Psoas muscle (tissue), 8 donors: ENCODE measurements at regions of chr17 and their contacts with region 1.

Region 1: DNA sequence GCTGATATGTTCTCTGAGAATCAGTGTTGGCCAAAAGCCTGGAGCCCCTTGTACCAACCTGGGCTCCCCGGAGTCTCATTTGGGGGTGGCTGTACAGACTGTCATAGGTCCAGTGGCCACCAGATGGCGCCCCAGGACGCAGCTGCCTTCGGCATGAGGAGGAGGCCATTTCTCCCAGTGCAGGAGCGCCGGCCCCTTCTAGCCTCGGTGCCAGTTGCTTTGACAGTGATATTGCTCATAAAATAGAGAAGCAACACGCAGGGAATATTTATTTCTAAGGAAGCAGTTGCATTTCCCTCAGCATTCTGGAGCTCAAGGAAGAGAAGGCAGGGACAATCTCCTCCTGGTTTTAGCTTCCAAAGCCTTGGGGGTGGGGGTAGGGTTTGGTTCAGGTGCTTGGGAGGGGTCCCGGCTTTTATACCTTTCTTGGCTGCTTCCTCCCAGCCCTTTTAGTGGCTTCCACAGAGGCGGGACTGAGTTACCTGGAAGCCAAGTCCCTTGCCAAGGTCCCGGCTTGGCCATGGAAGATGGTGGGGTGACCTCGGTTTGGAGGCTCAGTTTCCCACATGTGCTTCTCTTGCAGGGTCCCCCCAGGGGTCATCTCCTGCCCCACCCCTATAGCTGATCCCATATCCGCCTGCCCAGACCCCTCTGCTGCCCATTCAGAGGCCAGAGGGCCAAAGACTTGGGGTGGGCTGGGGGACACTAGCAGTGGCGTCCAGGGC is 117.8 kb upstream of the CDC42EP4 start:
- DNase-seq: peak; percentile 86 to 92
- ATAC-seq: peak; percentile 80 to 95 (median 92)
- H3K4me3 ChIP-seq: no peak overlapping the region
- H3K27ac ChIP-seq: no peak overlapping the region
- H3K4me1 ChIP-seq: no peaks in the 10 kb centered on the region
- H3K27me3 ChIP-seq: peaks cover 0 to 2% (median 0%) of the 10 kb centered on the region in 3 donors
- CTCF ChIP-seq: peak; percentile 93

Region 2: GRCh38 chr17:73387746-73388577 is 41.6 kb before region 1 on chr17:
- intact Hi-C with region 1: no loop called
- DNase-seq: peak in 1 of 2 donors; percentile 40
- ATAC-seq: no peak
- H3K4me3 ChIP-seq: no peak overlapping the region
- H3K27ac ChIP-seq: no peak overlapping the region
- H3K4me1 ChIP-seq: no peaks in the 10 kb centered on the region
- H3K27me3 ChIP-seq: no peaks in the 10 kb centered on the region
- CTCF ChIP-seq: no peak

Region 3: DNA sequence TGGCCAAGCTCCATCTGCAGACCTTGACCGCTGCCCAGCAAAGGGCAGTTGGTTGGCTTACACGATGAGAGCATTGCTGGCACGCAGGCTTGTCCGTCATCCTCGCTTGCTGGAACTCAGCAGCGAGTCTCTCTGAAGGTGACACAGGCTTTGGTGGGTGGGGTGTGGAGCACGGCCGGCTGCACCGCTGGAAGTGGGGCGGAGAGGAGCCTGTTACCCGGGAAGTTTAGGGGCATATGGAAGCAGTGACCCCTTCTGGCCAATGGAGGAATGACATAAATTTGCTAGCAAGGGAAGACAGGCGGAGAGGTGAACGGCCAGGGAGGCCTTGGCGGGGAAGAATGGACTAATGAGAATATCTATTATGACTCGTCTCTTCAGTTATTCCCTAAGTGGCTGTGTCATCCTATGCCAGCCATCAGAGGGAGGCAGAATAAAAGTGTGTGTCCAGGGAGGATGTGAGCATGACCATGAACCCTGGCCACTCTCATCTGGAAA is 280.5 kb after region 1 on chr17:
- intact Hi-C with region 1: loop called (anchors 2 to 5 kb)
- DNase-seq: peak in 1 of 2 donors; percentile 29
- ATAC-seq: peak; percentile 62 to 73 (median 68)
- H3K4me3 ChIP-seq: no peak overlapping the region
- H3K27ac ChIP-seq: no peak overlapping the region
- H3K4me1 ChIP-seq: no peaks in the 10 kb centered on the region
- H3K27me3 ChIP-seq: peaks cover 0 to 6% (median 0%) of the 10 kb centered on the region in 3 donors
- CTCF ChIP-seq: peak; percentile 68

Region 4: DNA sequence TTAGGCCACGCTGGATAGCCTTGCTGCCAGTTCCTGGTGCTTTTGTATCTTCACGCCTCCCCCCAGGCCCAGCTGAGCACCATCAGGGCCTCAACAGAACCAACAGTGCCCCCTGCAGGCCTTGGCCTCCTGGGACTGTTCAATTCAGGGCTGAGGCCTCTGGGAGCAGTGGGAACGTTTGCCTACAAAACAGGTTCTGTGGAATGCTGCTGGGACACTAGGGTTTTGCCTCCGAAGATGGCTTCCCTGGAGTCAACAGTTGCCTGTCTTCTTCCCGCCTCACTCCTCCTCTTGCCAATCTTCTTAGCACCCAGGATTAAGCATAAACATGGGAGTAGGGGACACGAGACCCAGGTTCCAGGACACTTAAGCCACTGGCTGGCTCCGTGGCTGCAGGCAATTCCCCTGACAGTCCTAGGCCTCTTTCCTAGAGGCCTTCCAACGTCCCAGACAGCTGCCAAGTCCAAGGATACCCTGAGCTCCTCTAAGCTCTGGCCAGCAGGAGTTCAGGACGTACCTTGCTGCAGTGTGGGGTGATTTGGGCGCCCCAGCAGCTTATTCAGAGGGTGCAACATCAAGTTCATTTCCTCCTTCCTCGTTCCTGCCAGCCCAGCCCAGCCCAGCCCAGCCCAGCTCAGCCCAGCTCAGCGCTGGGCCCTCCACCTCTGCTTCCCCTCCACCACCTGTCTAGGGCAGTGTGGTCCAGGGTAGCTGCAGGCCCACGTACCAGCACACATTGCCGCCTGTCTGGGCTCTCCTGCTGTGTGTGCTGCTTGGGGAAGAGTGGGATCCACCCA is 527.3 kb after region 1 on chr17:
- intact Hi-C with region 1: loop called in 1 of 2 experiments (anchors 5 kb)
- DNase-seq: no peak
- ATAC-seq: no peak
- H3K4me3 ChIP-seq: no peak overlapping the region
- H3K27ac ChIP-seq: no peak overlapping the region
- H3K4me1 ChIP-seq: no peaks in the 10 kb centered on the region
- H3K27me3 ChIP-seq: peaks cover under 1 to 21% (median 20%) of the 10 kb centered on the region in 3 donors
- CTCF ChIP-seq: peak; percentile 17

Region 5: GRCh38 chr17:74176546-74177001 is 747.0 kb after region 1 on chr17:
- intact Hi-C with region 1: loop called (anchors 2 kb)
- DNase-seq: peak in 1 of 2 donors; percentile 61
- ATAC-seq: peak; percentile 64 to 81 (median 80)
- H3K4me3 ChIP-seq: no peak overlapping the region
- H3K27ac ChIP-seq: no peak overlapping the region
- H3K4me1 ChIP-seq: no peaks in the 10 kb centered on the region
- H3K27me3 ChIP-seq: peaks cover 0 to 21% (median 6%) of the 10 kb centered on the region in 3 donors
- CTCF ChIP-seq: peak; percentile 75